ENCODE measurements at regions of chr1 and their contacts with region 1.

Region 1: GRCh38 chr1:66446261-66447001 is 87.5 kb upstream of the SGIP1 start:
- DNase-seq: peak; percentile 45
- ATAC-seq: peak; percentile 60
- H3K4me3 Mint-ChIP-seq: peak overlapping the region; percentile 64
- H3K27ac Mint-ChIP-seq: peak overlapping the region; percentile 97
- H3K4me1 Mint-ChIP-seq: peaks cover 33% of the 10 kb centered on the region
- H3K27me3 Mint-ChIP-seq: peaks cover 7% of the 10 kb centered on the region

Region 2: DNA sequence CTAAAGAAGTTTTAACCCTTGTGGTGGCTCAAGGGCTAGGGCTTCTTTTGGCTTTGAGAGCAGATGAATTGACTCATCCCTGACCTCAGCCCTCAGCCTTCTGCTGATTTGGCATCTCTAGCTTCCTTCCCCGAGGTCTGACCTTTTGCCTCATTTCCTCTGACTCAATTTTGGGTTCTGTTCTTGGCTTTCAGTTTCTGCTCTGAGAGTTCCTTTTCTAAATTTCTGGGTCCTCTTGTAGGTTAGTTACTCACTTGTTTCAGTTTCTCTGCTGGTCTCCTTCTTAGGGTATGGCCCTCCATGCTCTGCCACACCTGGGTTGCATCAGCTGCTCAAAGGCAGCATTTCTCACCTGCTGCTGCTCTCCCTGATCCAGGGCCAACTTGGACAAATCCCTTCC is 634.4 kb before region 1 on chr1:
- CTCF ChIA-PET with region 1: interaction called, 3 read pairs
- POLR2A ChIA-PET with region 1: no interaction called
- intact Hi-C with region 1: loop called (anchors 5 kb)
- DNase-seq: peak; percentile 81
- ATAC-seq: peak; percentile 98
- H3K4me3 Mint-ChIP-seq: peak overlapping the region; percentile 11
- H3K27ac Mint-ChIP-seq: peak overlapping the region; percentile 74
- H3K4me1 Mint-ChIP-seq: peaks cover 24% of the 10 kb centered on the region
- H3K27me3 Mint-ChIP-seq: peaks cover 36% of the 10 kb centered on the region

Region 3: GRCh38 chr1:66108624-66109023 is 337.8 kb before region 1 on chr1:
- CTCF ChIA-PET with region 1: no interaction called
- POLR2A ChIA-PET with region 1: no interaction called
- intact Hi-C with region 1: no loop called
- DNase-seq: no peak
- ATAC-seq: no peak
- H3K4me3 Mint-ChIP-seq: no peak overlapping the region
- H3K27ac Mint-ChIP-seq: no peak overlapping the region
- H3K4me1 Mint-ChIP-seq: no peaks in the 10 kb centered on the region
- H3K27me3 Mint-ChIP-seq: peaks cover 7% of the 10 kb centered on the region

Region 4: GRCh38 chr1:66253330-66253921 is 193.0 kb before region 1 on chr1:
- CTCF ChIA-PET with region 1: interaction called, 359 read pairs
- POLR2A ChIA-PET with region 1: interaction called, 4 read pairs
- intact Hi-C with region 1: loop called (anchors 1 kb)
- DNase-seq: no peak
- ATAC-seq: peak; percentile 81
- H3K4me3 Mint-ChIP-seq: no peak overlapping the region
- H3K27ac Mint-ChIP-seq: no peak overlapping the region
- H3K4me1 Mint-ChIP-seq: peaks cover 49% of the 10 kb centered on the region
- H3K27me3 Mint-ChIP-seq: no peaks in the 10 kb centered on the region

Region 5: GRCh38 chr1:66300972-66301451 is 145.4 kb before region 1 on chr1:
- CTCF ChIA-PET with region 1: interaction called, 10 read pairs
- POLR2A ChIA-PET with region 1: no interaction called
- intact Hi-C with region 1: no loop called
- DNase-seq: peak; percentile 43
- ATAC-seq: peak; percentile 96
- H3K4me3 Mint-ChIP-seq: peak overlapping the region; percentile 26
- H3K27ac Mint-ChIP-seq: peak overlapping the region; percentile 60
- H3K4me1 Mint-ChIP-seq: peaks cover 48% of the 10 kb centered on the region
- H3K27me3 Mint-ChIP-seq: no peaks in the 10 kb centered on the region

Region 6: GRCh38 chr1:66360285-66360724 is 86.1 kb before region 1 on chr1:
- CTCF ChIA-PET with region 1: interaction called, 10 read pairs
- POLR2A ChIA-PET with region 1: no interaction called
- intact Hi-C with region 1: no loop called
- DNase-seq: no peak
- ATAC-seq: peak; percentile 51
- H3K4me3 Mint-ChIP-seq: no peak overlapping the region
- H3K27ac Mint-ChIP-seq: no peak overlapping the region
- H3K4me1 Mint-ChIP-seq: peaks cover 76% of the 10 kb centered on the region
- H3K27me3 Mint-ChIP-seq: no peaks in the 10 kb centered on the region

Region 7: DNA sequence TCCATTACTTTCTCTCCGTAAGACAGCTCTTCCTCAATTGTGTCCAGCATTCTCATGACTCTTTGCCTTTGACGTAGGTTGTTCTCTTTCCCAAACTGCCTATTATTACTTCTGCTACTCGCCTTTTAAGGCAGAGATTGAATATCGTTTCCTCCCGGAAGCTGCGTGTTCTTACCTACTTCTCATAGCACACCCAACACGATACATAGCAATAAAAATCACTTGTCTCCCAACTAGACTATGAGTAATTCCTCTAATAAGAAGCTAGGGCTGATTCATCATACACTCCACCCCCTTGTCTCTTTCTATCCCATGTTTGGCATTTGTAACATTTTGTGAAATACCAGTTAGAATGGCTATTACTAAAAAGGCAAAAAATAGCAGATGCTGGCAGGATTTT is 31.7 kb after region 1 on chr1:
- CTCF ChIA-PET with region 1: no interaction called
- POLR2A ChIA-PET with region 1: no interaction called
- intact Hi-C with region 1: no loop called
- DNase-seq: no peak
- ATAC-seq: no peak
- H3K4me3 Mint-ChIP-seq: no peak overlapping the region
- H3K27ac Mint-ChIP-seq: no peak overlapping the region
- H3K4me1 Mint-ChIP-seq: no peaks in the 10 kb centered on the region
- H3K27me3 Mint-ChIP-seq: peaks cover 11% of the 10 kb centered on the region

Region 8: DNA sequence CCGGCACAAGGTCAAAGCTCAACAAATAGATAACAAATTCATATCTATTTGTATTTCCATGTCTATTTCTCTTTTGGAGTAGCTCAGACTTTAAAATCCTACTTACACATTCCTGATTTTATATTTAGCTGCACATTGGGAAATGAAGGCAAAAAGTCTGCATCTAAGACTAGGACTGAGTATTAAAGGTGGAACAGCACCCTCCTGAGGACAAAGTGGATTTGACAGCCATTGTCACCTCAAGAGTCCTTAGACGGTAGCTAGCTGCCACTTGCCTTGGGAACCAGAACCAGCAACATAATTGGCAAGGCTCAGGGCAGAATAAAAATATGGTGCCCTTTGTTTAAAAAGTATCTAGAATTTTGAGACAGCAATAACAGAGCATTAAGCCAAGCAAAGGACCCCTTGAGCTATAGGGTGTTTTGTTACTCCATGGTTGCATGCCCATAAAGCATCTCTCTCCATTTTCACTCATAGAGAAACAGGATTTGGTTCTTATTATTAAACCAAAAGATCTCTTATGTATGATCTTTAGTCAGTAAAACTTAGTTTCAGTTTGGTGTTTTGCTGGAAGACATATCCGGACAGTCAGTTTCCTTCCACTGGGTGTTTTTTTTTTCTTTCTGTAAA is 57.5 kb after region 1 on chr1:
- CTCF ChIA-PET with region 1: interaction called, 13 read pairs
- POLR2A ChIA-PET with region 1: no interaction called
- intact Hi-C with region 1: loop called in 1 of 2 experiments (anchors 2 kb)
- DNase-seq: peak; percentile 65
- ATAC-seq: no peak
- H3K4me3 Mint-ChIP-seq: no peak overlapping the region
- H3K27ac Mint-ChIP-seq: no peak overlapping the region
- H3K4me1 Mint-ChIP-seq: no peaks in the 10 kb centered on the region
- H3K27me3 Mint-ChIP-seq: peaks cover 14% of the 10 kb centered on the region